Aorta (tissue), 5 donors: ENCODE measurements at regions of chr14 and their contacts with region 1.

Region 1: GRCh38 chr14:57833323-57833722 is 32.6 kb downstream of the SLC35F4 start:
- DNase-seq: peak in 1 of 2 donors; percentile 59
- ATAC-seq: peak; percentile 61
- H3K4me3 ChIP-seq: no peak overlapping the region
- H3K27ac ChIP-seq: no peak overlapping the region
- H3K4me1 ChIP-seq: peaks cover 1 to 12% of the 10 kb centered on the region in 2 donors
- H3K27me3 ChIP-seq: no peaks in the 10 kb centered on the region

Region 2: GRCh38 chr14:57962325-57963035 is 129.2 kb after region 1 on chr14:
- intact Hi-C with region 1: loop called in 1 of 2 experiments (anchors 10 kb)
- DNase-seq: no peak
- ATAC-seq: peak; percentile 68
- H3K4me3 ChIP-seq: no peak overlapping the region
- H3K27ac ChIP-seq: peak overlapping the region; percentile 31 to 97
- H3K4me1 ChIP-seq: peaks cover 7 to 13% of the 10 kb centered on the region in 2 donors
- H3K27me3 ChIP-seq: no peaks in the 10 kb centered on the region